Heart left ventricle (tissue), 16 donors: ENCODE measurements at regions of chr19 and their contacts with region 1.

Region 1: DNA sequence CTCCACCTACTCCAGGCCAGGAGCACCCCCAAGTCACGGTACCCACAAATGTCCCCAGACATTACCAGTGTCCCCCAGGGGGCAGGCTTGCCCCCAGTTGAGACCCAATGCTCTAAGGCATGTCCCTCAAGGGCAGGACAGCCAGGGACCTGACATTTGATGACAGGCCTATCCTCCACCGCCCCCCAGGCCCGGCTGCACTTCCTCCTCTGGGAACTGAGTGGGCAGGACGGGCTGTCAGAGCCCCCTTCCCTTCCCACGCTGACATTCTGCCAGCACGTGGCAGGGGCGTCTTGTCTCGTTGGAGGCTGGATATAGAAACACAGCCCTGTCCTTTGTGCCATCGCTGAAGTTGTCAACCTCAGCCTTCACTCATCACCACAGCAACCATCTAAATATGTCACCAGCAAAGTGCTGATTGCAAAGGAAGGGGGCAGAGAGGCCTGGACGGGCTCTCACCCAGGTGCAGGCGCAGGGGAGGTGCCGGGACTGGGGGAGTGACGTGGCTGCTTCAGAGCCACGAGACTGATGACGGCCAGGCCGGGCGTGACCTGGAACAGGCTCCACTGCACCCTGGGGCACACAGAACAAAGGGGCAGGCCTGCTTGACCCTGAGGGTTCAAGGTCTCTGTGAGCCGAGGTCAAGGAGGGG is 38.4 kb downstream of the GNG7 start:
- DNase-seq: peak; percentile 79 to 94 (median 87)
- ATAC-seq: peak; percentile 94 to 97 (median 95)
- H3K4me3 ChIP-seq: no peak overlapping the region
- H3K27ac ChIP-seq: peak overlapping the region; percentile 66 to 97 (median 84)
- H3K4me1 ChIP-seq: peaks cover 0 to 17% (median 5%) of the 10 kb centered on the region in 12 donors
- H3K27me3 ChIP-seq: no peaks in the 10 kb centered on the region
- CTCF ChIP-seq: peak; percentile 9 to 51 (median 32)
- POLR2A ChIP-seq: peak in 1 of 2 donors; percentile 19

Region 2: GRCh38 chr19:2702162-2703076 is 38.4 kb after region 1 on chr19 and contains the start of gene GNG7:
- intact Hi-C with region 1: loop called in 3 of 10 experiments (anchors 2 to 5 kb)
- DNase-seq: peak; percentile 92 to 97 (median 94)
- ATAC-seq: peak; percentile 94 to 100 (median 99)
- H3K4me3 ChIP-seq: peak within 1 kb of the TSS; percentile 20 to 81 (median 58)
- H3K27ac ChIP-seq: peak within 1 kb of the TSS in 7 of 12 donors; percentile 34 to 85 (median 55)
- H3K4me1 ChIP-seq: peaks cover 0 to 31% (median 2%) of the 10 kb centered on the region in 12 donors
- H3K27me3 ChIP-seq: peaks cover 0 to 9% (median 0%) of the 10 kb centered on the region in 9 donors
- CTCF ChIP-seq: no peak
- POLR2A ChIP-seq: peak; percentile 86 to 96
- total RNA-seq, gene GNG7: 13.9 to 46.4 (median 32.5) TPM

Region 3: DNA sequence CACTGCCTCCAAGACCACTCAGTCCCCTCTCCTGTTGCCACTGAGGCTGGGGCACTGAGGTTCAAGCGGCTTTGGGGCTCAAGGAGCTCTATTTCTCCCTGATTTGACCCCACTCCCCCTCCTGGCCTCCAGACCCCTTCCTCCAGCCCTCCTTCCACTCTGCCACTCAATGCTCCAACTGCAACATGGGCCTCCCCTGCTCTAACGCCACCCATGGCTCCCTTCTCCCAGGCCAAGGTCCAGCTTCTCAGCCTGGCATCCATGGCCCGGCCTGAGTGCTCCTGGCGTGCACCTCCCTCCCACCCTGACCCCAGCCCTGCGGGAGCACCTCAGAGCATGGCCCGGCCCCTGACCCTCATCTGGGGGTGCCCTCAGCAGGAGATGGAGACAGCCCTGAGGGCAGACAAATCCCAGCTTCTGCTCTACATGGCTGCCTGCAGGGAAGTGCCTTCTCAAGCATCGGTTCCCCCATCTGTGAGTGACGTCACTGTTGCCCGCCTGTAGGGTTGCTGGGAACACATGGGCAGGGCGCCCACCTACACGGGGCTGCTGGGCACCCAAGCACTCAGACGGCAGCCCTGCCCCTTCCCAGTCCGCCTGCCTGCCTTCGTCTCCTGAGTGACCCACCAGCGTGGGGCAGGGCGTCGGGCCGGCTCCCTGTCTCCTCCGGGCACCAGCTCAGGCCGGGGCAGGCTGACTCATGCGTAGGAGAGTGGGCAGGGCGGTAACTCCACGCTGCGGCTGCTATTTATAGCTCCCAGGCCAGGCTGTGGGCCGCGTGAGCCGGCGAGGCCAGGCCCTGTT is 58.7 kb after region 1 on chr19:
- intact Hi-C with region 1: loop called in 4 of 10 experiments (anchors 2 to 10 kb)
- DNase-seq: peak; percentile 67 to 90 (median 85)
- ATAC-seq: peak; percentile 81 to 88 (median 85)
- H3K4me3 ChIP-seq: no peak overlapping the region
- H3K27ac ChIP-seq: peak overlapping the region in 11 of 12 donors; percentile 77 to 95 (median 90)
- H3K4me1 ChIP-seq: peaks cover 0 to 42% (median 13%) of the 10 kb centered on the region in 12 donors
- H3K27me3 ChIP-seq: peaks cover 9 to 52% (median 23%) of the 10 kb centered on the region in 9 donors
- CTCF ChIP-seq: no peak
- POLR2A ChIP-seq: peak in 1 of 2 donors; percentile 59

Region 4: DNA sequence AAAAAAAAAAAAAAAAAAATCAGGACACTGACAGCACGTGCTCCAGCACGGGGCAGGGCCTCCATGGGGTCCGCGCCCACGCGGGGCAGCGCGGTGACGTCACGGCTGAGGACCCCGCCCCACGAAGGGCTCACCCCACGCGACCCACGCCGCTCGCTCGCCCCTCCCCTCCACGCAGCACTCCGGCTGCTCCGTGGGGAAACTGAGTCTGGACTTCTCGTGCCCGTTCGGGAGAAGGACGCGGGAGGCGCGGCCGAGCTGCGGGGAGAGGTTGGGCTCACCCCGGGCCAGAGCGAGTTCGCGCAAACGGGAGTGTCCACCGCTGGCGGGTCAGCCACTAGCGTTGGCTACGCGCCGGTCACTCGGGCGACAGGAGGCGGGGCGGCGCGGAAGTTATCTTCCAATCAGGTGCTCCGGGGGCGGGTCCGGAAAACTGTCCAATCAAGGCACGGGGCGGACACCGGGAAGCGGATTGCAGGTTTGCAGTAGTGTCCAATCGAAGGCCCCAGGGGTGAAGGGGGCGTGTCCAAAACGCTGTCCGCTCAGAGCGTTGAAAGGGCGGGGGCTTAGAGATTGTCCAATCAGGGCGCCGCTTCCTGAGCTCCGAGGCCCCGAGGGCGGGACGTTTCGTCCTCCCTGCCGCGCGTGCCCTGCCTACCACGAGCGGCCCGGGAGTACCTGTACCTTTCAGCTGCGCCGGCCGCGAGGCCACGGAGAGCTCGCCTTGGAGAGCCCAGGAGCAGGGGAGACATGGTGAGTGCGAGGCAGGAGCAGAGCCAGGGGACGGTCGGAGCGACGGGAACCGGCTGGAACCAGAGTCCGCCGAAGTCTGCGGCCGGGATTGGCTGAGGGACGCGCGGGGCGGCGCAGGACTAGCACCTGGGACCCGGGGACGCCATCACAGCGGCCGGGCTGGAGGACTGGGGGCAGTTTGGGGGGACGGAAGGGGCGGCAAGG is 236.5 kb after region 1 on chr19 and contains the start of gene ZNF57:
- intact Hi-C with region 1: loop called in 1 of 10 experiments (anchors 10 kb)
- DNase-seq: peak; percentile 100
- ATAC-seq: peak; percentile 99 to 100 (median 99)
- H3K4me3 ChIP-seq: peak within 1 kb of the TSS; percentile 40 to 86 (median 70)
- H3K27ac ChIP-seq: peak within 1 kb of the TSS in 11 of 12 donors; percentile 66 to 93 (median 80)
- H3K4me1 ChIP-seq: peaks cover 0 to 8% (median 3%) of the 10 kb centered on the region in 12 donors
- H3K27me3 ChIP-seq: no peaks in the 10 kb centered on the region
- CTCF ChIP-seq: no peak
- POLR2A ChIP-seq: peak in 1 of 2 donors; percentile 59
- total RNA-seq, gene ZNF57: 2.1 to 5.6 (median 3.3) TPM